ENCODE measurements at regions of chr6 and their contacts with region 1.

Region 1: GRCh38 chr6:107489636-107490565 is at the start of gene SOBP:
- DNase-seq: peak; percentile 49
- H3K4me3 ChIP-seq: peak within 1 kb of the TSS; percentile 44 to 65
- H3K27ac ChIP-seq: peak within 1 kb of the TSS; percentile 76 to 77
- H3K4me1 ChIP-seq: no peaks in the 10 kb centered on the region
- H3K27me3 ChIP-seq: no peaks in the 10 kb centered on the region
- CTCF ChIP-seq: no peak
- POLR2A ChIP-seq: no peak
- total RNA-seq, gene SOBP: 15.8 to 23.3 TPM

Region 2: GRCh38 chr6:107246972-107247615 is 242.8 kb before region 1 on chr6:
- intact Hi-C with region 1: loop called (anchors 10 kb)
- DNase-seq: peak; percentile 65
- H3K4me3 ChIP-seq: peak overlapping the region in 1 of 2 donors; percentile 10
- H3K27ac ChIP-seq: peak overlapping the region; percentile 75 to 86
- H3K4me1 ChIP-seq: peaks cover 3% of the 10 kb centered on the region
- H3K27me3 ChIP-seq: no peaks in the 10 kb centered on the region
- CTCF ChIP-seq: no peak
- POLR2A ChIP-seq: no peak

Region 3: DNA sequence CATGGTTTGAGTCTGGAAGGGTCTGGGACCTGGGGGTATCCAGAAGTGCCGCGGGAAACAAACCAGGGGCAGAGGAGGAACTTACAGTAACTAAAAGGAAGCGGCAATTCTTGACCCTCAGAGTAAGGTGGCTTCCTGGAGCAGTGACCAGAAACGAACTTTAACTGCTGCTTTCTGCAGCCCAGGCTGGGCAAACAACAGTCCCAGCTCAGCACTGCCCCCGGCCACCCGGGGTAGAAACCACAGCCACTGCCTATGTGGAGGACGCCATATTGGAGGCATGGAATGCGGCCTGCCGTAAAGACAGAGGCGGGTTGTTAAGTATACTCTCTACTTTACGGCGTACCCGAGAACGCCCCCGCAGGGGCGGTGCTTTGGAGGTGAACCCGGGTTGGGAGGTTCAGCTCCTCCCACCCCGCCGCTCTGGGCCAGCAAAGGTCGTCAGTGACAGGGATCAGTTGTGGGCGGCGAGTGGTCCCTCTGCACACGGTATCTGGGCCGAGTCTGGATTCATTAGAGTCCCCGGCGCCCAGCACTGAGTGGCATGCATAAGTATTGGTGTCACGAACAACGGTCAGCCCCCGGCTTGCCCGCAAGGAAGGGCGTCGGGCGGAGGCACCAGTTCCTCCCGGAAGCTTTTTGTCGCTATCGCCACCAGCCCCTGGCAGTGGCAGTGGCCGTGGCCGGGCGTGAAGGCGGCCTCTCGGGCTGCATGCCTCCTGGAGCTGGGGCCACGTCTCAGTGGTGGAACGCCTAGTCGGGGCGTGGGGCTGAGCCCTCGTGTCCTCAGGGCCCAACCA is 30.4 kb before region 1 on chr6 and contains the start of gene PDSS2:
- intact Hi-C with region 1: loop called (anchors 2 kb)
- DNase-seq: peak; percentile 98
- H3K4me3 ChIP-seq: peak within 1 kb of the TSS; percentile 69 to 95
- H3K27ac ChIP-seq: peak within 1 kb of the TSS; percentile 80 to 92
- H3K4me1 ChIP-seq: peaks cover 3% of the 10 kb centered on the region
- H3K27me3 ChIP-seq: no peaks in the 10 kb centered on the region
- CTCF ChIP-seq: peak in 2 of 4 experiments; percentile 42 to 53
- POLR2A ChIP-seq: peak; percentile 67
- total RNA-seq, gene PDSS2: 12.7 to 35.3 TPM

Region 4: GRCh38 chr6:107532706-107533105 is 42.8 kb after region 1 on chr6:
- intact Hi-C with region 1: loop called (anchors 5 kb)
- DNase-seq: no peak
- H3K4me3 ChIP-seq: no peak overlapping the region
- H3K27ac ChIP-seq: no peak overlapping the region
- H3K4me1 ChIP-seq: no peaks in the 10 kb centered on the region
- H3K27me3 ChIP-seq: no peaks in the 10 kb centered on the region
- CTCF ChIP-seq: no peak
- POLR2A ChIP-seq: no peak

Region 5: GRCh38 chr6:107657755-107658461 is 168.0 kb after region 1 on chr6:
- intact Hi-C with region 1: loop called (anchors 5 kb)
- DNase-seq: no peak
- H3K4me3 ChIP-seq: no peak overlapping the region
- H3K27ac ChIP-seq: no peak overlapping the region
- H3K4me1 ChIP-seq: no peaks in the 10 kb centered on the region
- H3K27me3 ChIP-seq: no peaks in the 10 kb centered on the region
- CTCF ChIP-seq: peak in 1 of 4 experiments; percentile 15
- POLR2A ChIP-seq: no peak

Region 6: DNA sequence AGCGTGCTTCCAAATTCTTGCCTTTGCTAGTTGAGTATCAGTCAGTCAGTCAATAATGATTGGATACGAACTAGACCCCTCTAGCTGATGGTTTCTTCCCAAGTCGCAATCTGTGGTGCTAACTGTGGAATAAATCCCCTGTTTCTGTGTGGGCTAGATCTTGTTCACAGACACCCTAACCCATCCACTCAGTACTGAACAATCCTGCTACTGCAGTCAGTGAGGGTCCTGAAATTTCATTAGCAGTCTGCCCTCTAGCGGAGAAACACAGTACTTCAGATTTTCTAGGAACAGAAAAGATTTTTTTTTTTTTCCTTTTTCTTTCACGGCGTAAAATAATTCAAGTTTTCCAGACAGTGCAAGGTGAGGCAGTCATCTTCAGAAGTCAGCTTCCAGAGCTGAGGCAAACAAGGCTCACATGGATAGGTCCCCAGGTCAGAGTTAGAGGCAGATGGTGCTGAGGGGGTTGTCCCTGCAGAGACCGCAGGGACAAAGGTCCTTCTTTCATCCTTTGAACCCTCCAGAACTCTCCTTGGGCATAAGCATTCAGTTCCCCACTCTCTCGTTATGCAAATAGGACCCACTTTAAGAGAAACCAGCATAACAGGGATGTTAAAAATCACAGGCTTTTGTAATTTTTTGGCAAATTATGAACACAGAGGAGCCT is 214.6 kb after region 1 on chr6:
- intact Hi-C with region 1: loop called (anchors 10 kb)
- DNase-seq: no peak
- H3K4me3 ChIP-seq: no peak overlapping the region
- H3K27ac ChIP-seq: no peak overlapping the region
- H3K4me1 ChIP-seq: no peaks in the 10 kb centered on the region
- H3K27me3 ChIP-seq: no peaks in the 10 kb centered on the region
- CTCF ChIP-seq: peak; percentile 68 to 82 (median 72)
- POLR2A ChIP-seq: no peak

Measured in prostate gland (tissue), 2 donors.